Common myeloid progenitor, CD34-positive (primary cell): ENCODE measurements at regions of chr2 and their contacts with region 1.

Region 1: GRCh38 chr2:190947711-190948251 is 66.2 kb downstream of the STAT1 start:
- DNase-seq: peak; percentile 83 to 95 (median 92)
- H3K4me3 ChIP-seq: peak overlapping the region in 6 of 7 experiments; percentile 44 to 78 (median 58)
- H3K27ac ChIP-seq: peak overlapping the region; percentile 77 to 85
- H3K4me1 ChIP-seq: peaks cover 19 to 33% (median 22%) of the 10 kb centered on the region in 4 experiments
- H3K27me3 ChIP-seq: no peaks in the 10 kb centered on the region

Region 2: DNA sequence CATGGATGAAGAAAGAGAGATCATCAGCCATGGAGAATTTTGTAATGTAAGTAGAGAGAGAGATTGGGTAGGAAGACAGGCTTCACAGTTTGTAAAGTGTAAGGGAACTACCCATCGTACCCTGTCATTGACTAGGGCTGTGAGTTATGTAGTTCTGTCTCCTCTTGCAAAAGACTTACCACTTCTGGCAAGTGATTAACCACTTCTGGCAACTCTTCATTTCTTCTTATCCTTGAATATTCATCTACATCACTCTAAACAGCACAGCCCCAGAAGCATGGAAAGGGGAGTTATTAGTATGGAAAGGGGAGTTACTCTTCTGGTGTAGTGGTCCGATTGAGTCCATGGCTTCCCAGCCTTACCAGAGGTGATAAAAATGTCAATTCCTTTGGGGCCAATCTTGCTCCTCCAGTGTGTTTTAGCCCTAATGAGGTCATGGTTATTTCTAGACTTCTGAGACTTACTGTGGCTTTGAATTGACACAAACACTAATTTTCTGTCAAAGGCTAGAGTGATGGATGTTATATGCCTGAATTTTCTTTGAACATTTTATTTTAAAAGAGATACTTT is 14.2 kb after region 1 on chr2:
- CTCF ChIA-PET with region 1: interaction called, 19 read pairs
- POLR2A ChIA-PET with region 1: no interaction called
- DNase-seq: peak in 1 of 3 donors; percentile 28
- H3K4me3 ChIP-seq: no peak overlapping the region
- H3K27ac ChIP-seq: no peak overlapping the region
- H3K4me1 ChIP-seq: peaks cover 0 to 2% (median 0%) of the 10 kb centered on the region in 4 experiments
- H3K27me3 ChIP-seq: no peaks in the 10 kb centered on the region